ENCODE measurements at regions of chr5 and their contacts with region 1.

Region 1: GRCh38 chr5:88680253-88681132 is 202.5 kb downstream of the MEF2C start:
- DNase-seq: peak; percentile 52 to 89 (median 68)
- ATAC-seq: peak; percentile 75 to 97 (median 92)
- H3K4me3 ChIP-seq: peak overlapping the region in 9 of 12 donors; percentile 19 to 53 (median 38)
- H3K27ac ChIP-seq: no peak overlapping the region
- H3K4me1 ChIP-seq: peaks cover 0 to 38% (median 12%) of the 10 kb centered on the region in 12 donors
- H3K27me3 ChIP-seq: peaks cover 77 to 100% (median 98%) of the 10 kb centered on the region in 9 donors
- CTCF ChIP-seq: peak; percentile 84 to 98 (median 96)
- POLR2A ChIP-seq: no peak

Region 2: GRCh38 chr5:87421307-87421706 is 1259.2 kb before region 1 on chr5:
- intact Hi-C with region 1: loop called in 1 of 10 experiments (anchors 10 kb)
- DNase-seq: no peak
- ATAC-seq: no peak
- H3K4me3 ChIP-seq: no peak overlapping the region
- H3K27ac ChIP-seq: no peak overlapping the region
- H3K4me1 ChIP-seq: no peaks in the 10 kb centered on the region
- H3K27me3 ChIP-seq: no peaks in the 10 kb centered on the region
- CTCF ChIP-seq: no peak
- POLR2A ChIP-seq: no peak

Region 3: DNA sequence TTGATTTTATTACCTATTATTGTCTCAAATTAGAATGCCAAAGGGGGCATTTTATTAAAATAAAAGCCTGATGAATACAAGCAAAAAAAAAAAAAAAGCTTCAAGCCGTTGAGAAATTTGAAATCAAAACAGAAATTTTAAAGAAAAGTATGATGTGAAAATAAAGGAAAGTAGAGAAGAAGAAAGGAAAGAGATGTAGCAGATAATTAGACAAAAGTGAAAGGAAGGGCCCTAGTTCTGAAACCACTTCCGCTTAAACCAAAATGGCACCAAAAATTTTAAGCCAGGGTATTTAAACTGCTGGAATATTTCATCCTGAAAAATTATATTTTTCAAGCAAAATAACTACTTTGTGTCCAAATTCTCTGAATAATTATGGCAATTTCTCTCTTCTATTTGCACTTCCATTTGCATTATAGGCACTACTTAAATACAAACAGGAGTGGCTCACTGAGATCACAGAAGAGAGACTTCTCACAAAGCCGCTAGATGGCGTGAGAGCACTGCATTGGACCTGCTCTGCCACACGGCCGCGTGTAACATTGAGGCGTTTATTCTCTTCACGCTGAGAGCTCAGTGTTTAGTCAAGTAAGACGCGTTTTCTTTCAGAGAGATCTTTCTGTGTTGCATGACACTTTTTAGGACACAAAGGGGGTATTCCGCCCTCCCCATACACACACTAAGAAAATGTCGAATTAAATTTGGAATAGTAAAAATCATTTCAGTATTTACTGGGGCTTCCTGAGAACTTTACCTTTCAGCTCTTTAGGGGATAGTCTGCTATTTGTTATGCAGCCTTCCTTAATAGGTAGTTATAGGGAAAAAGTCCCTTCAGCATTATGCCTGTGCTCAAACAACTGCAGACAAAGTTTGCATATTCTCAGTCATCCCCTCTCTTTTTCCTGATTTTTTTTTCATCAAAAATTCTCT is 899.4 kb before region 1 on chr5:
- intact Hi-C with region 1: loop called in 7 of 10 experiments (anchors 1 to 5 kb)
- DNase-seq: peak; percentile 76 to 80 (median 76)
- ATAC-seq: peak; percentile 91 to 98 (median 96)
- H3K4me3 ChIP-seq: no peak overlapping the region
- H3K27ac ChIP-seq: no peak overlapping the region
- H3K4me1 ChIP-seq: no peaks in the 10 kb centered on the region
- H3K27me3 ChIP-seq: peaks cover 0 to 78% (median 36%) of the 10 kb centered on the region in 9 donors
- CTCF ChIP-seq: peak; percentile 83 to 97 (median 92)
- POLR2A ChIP-seq: no peak

Region 4: DNA sequence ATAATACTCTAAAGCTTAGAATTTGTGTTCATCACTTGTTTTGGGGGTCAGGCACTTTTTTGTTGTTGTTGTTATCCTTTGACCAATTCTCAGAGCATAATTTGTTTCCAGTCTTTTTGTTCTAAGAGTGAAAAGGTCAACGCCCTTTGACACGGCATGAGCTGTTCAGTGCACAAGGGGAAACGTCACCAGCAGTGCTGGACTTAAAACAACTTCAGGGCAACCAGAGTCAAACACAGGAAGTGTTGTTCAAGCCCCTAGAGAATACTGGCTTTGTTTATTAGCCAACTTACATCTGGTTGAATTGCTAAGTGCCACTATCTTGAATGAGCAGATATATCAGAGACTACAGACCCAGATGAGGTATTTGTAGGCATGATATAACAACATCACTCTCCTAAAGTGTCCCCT is 780.8 kb before region 1 on chr5:
- intact Hi-C with region 1: loop called in 1 of 10 experiments (anchors 10 kb)
- DNase-seq: peak in 4 of 5 donors; percentile 49 to 67 (median 60)
- ATAC-seq: peak; percentile 88 to 96 (median 94)
- H3K4me3 ChIP-seq: no peak overlapping the region
- H3K27ac ChIP-seq: peak overlapping the region in 10 of 12 donors; percentile 5 to 64 (median 44)
- H3K4me1 ChIP-seq: peaks cover 0 to 9% (median 3%) of the 10 kb centered on the region in 12 donors
- H3K27me3 ChIP-seq: no peaks in the 10 kb centered on the region
- CTCF ChIP-seq: no peak
- POLR2A ChIP-seq: no peak

Region 5: GRCh38 chr5:88251048-88251711 is 429.3 kb before region 1 on chr5:
- intact Hi-C with region 1: loop called in 1 of 10 experiments (anchors 10 kb)
- DNase-seq: no peak
- ATAC-seq: no peak
- H3K4me3 ChIP-seq: no peak overlapping the region
- H3K27ac ChIP-seq: no peak overlapping the region
- H3K4me1 ChIP-seq: peaks cover 0 to 18% (median 0%) of the 10 kb centered on the region in 12 donors
- H3K27me3 ChIP-seq: no peaks in the 10 kb centered on the region
- CTCF ChIP-seq: no peak
- POLR2A ChIP-seq: no peak

Region 6: DNA sequence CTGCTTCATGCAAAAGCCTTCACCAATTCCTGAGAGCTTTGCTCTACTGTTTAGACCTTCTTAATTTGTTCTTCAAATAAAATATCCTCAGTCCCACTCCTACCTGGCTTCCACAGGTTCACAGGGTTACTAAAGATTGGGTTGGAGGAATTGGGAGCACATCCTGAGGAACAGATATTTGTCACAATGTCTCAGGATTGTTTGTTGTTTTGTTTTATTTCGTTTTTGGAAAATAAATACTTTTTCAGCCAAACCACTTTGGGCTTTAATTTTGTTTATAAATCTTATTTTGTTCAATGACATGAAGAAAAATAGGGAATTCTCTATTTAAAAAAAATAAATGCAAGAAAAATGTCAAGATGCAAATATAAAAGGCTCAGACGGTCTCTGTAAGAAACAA is 46.5 kb before region 1 on chr5:
- intact Hi-C with region 1: no loop called
- DNase-seq: no peak
- ATAC-seq: no peak
- H3K4me3 ChIP-seq: no peak overlapping the region
- H3K27ac ChIP-seq: no peak overlapping the region
- H3K4me1 ChIP-seq: no peaks in the 10 kb centered on the region
- H3K27me3 ChIP-seq: peaks cover 0 to 14% (median 0%) of the 10 kb centered on the region in 9 donors
- CTCF ChIP-seq: no peak
- POLR2A ChIP-seq: no peak